Activated CD4-positive, alpha-beta memory T cell treated with anti-CD3 and anti-CD28 coated beads for 36 hours (primary cell): ENCODE measurements at regions of chr13 and their contacts with region 1.

Region 1: DNA sequence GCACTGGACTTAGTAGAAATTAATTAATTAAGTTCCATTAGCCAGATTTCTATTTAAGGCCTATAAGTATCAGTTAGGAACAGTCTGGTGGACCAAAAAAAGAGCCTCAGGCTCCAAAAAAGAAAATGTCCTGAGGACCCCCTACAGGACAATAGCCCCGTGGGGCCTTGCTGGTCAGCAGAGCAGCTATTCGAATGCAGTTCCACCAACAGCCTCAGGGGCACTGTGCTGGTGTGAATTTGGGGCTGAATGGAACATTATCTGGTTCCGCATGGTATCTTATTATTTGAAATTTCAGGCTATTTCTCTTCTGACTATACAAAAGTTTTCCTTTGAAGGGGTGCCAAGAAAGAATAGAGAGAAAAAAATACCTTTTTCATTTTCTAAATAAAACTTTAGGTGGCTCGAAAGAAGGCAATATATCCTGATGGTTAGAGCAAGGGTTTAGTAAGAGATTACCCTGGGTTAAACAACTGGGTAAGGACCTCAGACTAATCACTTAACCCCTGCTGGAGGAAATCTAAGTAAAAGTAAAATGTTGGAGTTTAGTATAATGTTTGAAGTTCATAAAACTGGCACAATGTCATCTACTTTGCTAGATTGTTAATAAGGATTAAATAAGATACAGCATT is 147.2 kb downstream of the MIPEP start:
- DNase-seq: no peak
- H3K4me3 Mint-ChIP-seq: no peak overlapping the region
- H3K27ac Mint-ChIP-seq: no peak overlapping the region
- H3K4me1 Mint-ChIP-seq: peaks cover 25% of the 10 kb centered on the region
- H3K27me3 Mint-ChIP-seq: peaks cover 3% of the 10 kb centered on the region

Region 2: GRCh38 chr13:23060959-23061358 is 681.0 kb before region 1 on chr13:
- CTCF ChIA-PET with region 1: no interaction called
- POLR2A ChIA-PET with region 1: no interaction called
- intact Hi-C with region 1: loop called (anchors 5 kb)
- DNase-seq: no peak
- H3K4me3 Mint-ChIP-seq: no peak overlapping the region
- H3K27ac Mint-ChIP-seq: no peak overlapping the region
- H3K4me1 Mint-ChIP-seq: no peaks in the 10 kb centered on the region
- H3K27me3 Mint-ChIP-seq: no peaks in the 10 kb centered on the region

Region 3: GRCh38 chr13:23673354-23673753 is 68.6 kb before region 1 on chr13:
- CTCF ChIA-PET with region 1: no interaction called
- POLR2A ChIA-PET with region 1: no interaction called
- intact Hi-C with region 1: no loop called
- DNase-seq: no peak
- H3K4me3 Mint-ChIP-seq: no peak overlapping the region
- H3K27ac Mint-ChIP-seq: no peak overlapping the region
- H3K4me1 Mint-ChIP-seq: peaks cover 9% of the 10 kb centered on the region
- H3K27me3 Mint-ChIP-seq: peaks cover 18% of the 10 kb centered on the region

Region 4: GRCh38 chr13:23794267-23795161 is 52.5 kb after region 1 on chr13:
- CTCF ChIA-PET with region 1: interaction called, 3 read pairs
- POLR2A ChIA-PET with region 1: no interaction called
- intact Hi-C with region 1: loop called (anchors 1 kb)
- DNase-seq: no peak
- H3K4me3 Mint-ChIP-seq: no peak overlapping the region
- H3K27ac Mint-ChIP-seq: no peak overlapping the region
- H3K4me1 Mint-ChIP-seq: peaks cover 29% of the 10 kb centered on the region
- H3K27me3 Mint-ChIP-seq: no peaks in the 10 kb centered on the region